ENCODE measurements at regions of chr7 and their contacts with region 1.

Region 1: DNA sequence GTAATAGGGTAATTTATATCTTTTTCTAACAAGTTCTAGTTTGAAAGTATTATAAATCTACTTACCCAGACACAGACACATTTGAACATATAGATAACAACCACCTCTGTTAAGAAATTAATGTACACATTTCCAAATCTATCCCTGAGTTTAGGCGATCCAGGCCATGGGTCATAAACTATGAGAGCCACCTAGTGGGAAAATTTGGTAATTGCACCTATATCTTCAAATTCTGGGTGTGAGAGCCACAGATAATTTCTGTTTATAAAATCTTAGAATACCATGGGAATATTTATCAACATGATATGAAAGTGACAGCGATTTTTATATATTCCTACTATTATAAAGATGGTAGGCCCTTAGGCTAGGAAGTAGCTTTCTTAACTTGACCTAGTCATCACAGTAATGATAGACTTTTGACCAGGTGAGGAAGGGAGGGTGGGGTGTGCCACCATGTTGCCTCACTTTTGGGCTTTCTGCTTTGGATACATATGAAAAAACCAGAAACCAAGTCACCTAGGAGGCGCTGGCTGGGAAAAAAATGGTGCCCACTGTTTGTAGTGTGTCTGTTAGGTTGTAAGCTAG is 8.0 kb upstream of the EPHA1 start:
- DNase-seq: peak; percentile 43 to 69 (median 52)
- H3K4me3 ChIP-seq: no peak overlapping the region
- H3K4me3 Mint-ChIP-seq: no peak overlapping the region
- H3K27ac ChIP-seq: no peak overlapping the region
- H3K27ac Mint-ChIP-seq: no peak overlapping the region
- H3K4me1 ChIP-seq: peaks cover 25 to 56% of the 10 kb centered on the region in 2 donors
- H3K4me1 Mint-ChIP-seq: peaks cover 51% of the 10 kb centered on the region
- H3K27me3 ChIP-seq: no peaks in the 10 kb centered on the region
- H3K27me3 Mint-ChIP-seq: no peaks in the 10 kb centered on the region
- CTCF ChIP-seq: peak; percentile 88

Region 2: GRCh38 chr7:143321734-143322133 is 94.9 kb before region 1 on chr7:
- intact Hi-C with region 1: loop called in 1 of 2 experiments (anchors 10 kb)
- DNase-seq: peak; percentile 38 to 66 (median 63)
- H3K4me3 ChIP-seq: no peak overlapping the region
- H3K4me3 Mint-ChIP-seq: no peak overlapping the region
- H3K27ac ChIP-seq: no peak overlapping the region
- H3K27ac Mint-ChIP-seq: no peak overlapping the region
- H3K4me1 ChIP-seq: peaks cover 34 to 37% of the 10 kb centered on the region in 2 donors
- H3K4me1 Mint-ChIP-seq: peaks cover 51% of the 10 kb centered on the region
- H3K27me3 ChIP-seq: no peaks in the 10 kb centered on the region
- H3K27me3 Mint-ChIP-seq: peaks cover 0 to 12% (median 5%) of the 10 kb centered on the region in 3 donors
- CTCF ChIP-seq: peak; percentile 31

Region 3: GRCh38 chr7:143362131-143363015 is 54.3 kb before region 1 on chr7 and contains the start of gene FAM131B:
- intact Hi-C with region 1: loop called in 1 of 2 experiments (anchors 10 kb)
- DNase-seq: no peak
- H3K4me3 ChIP-seq: peak within 1 kb of the TSS; percentile 28 to 77 (median 46)
- H3K4me3 Mint-ChIP-seq: peak within 1 kb of the TSS; percentile 92 to 97
- H3K27ac ChIP-seq: no peak within 1 kb of the TSS
- H3K27ac Mint-ChIP-seq: no peak within 1 kb of the TSS
- H3K4me1 ChIP-seq: peaks cover 15 to 27% of the 10 kb centered on the region in 2 donors
- H3K4me1 Mint-ChIP-seq: peaks cover 26% of the 10 kb centered on the region
- H3K27me3 ChIP-seq: peaks cover 32 to 49% of the 10 kb centered on the region in 2 donors
- H3K27me3 Mint-ChIP-seq: peaks cover 53 to 65% (median 63%) of the 10 kb centered on the region in 3 donors
- CTCF ChIP-seq: no peak
- polyA plus RNA-seq, gene FAM131B: 0.69 to 0.72 TPM in 2 of 3 donors, not detected in the other

Region 4: DNA sequence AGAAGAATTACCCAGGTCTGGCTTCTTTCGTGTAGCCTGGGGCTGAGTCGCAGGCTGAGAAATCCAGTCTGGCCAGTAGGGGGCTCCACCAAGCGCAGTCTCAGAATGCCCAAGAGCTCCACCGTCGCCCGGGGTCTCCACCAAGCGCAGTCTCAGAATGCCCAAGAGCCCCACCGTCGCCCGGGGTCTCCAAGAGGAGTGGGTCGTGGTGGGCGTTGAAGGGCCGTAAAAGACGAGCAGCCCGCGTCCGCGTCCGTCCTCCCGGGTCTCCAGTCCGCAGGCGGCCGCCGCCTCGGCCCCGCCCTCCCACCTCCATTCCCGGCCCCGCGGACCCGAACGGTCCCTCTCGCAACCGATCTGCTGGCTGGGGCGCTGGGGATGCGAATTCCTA is 36.4 kb before region 1 on chr7:
- intact Hi-C with region 1: loop called (anchors 5 kb)
- DNase-seq: peak; percentile 93 to 95 (median 93)
- H3K4me3 ChIP-seq: peak overlapping the region; percentile 81 to 99 (median 98)
- H3K4me3 Mint-ChIP-seq: peak overlapping the region; percentile 92 to 97
- H3K27ac ChIP-seq: peak overlapping the region; percentile 99
- H3K27ac Mint-ChIP-seq: peak overlapping the region in 6 of 7 donors; percentile 97 to 100 (median 98)
- H3K4me1 ChIP-seq: peaks cover 69 to 80% of the 10 kb centered on the region in 2 donors
- H3K4me1 Mint-ChIP-seq: peaks cover 47% of the 10 kb centered on the region
- H3K27me3 ChIP-seq: no peaks in the 10 kb centered on the region
- H3K27me3 Mint-ChIP-seq: peaks cover 0 to 2% (median 0%) of the 10 kb centered on the region in 3 donors
- CTCF ChIP-seq: peak; percentile 88

Measured in CD14-positive monocyte (primary cell).